ENCODE measurements at regions of chr12 and their contacts with region 1.

Region 1: DNA sequence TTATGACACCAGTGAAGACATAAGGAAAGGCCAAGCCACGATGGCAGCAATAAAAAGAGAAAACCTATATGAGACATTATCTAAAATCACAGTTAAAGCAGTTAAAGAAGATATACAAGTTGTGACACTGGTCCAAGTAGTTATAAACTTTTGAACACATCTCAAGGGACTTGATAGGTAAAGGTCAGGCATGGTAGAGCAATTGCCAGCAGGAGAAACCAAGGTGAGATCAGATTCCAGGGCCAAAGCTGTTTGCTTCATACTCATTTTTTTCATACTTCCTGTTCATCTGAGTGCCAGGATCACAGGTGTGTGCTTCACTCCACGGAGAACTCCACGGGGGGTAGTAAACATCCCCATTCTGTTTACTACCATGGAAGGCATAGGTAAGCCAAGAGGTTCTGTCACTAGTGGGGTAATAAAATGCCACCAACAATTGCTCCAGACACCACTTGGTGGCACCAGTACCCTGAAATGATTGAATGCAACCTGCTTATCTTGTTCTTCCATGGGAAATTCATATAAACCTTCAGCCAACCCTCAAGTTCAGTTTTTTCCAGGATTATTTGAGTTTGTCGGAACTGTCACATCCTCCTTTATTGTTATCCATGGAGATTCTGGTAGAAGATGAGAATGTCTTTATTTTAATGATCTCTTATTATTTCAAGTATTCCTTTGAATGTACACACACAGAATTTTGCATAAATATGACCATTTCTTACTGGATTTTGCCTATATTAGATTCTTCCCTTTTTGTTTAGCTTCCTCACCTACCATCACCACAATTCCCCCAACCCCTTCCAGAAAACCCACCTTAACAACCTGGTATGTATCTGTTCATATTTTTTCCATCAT is 59.2 kb upstream of the TSPAN8 start:
- DNase-seq: no peak
- ATAC-seq: peak in 2 of 4 donors; percentile 45 to 77
- H3K4me3 ChIP-seq: no peak overlapping the region
- H3K27ac ChIP-seq: no peak overlapping the region
- H3K4me1 ChIP-seq: no peaks in the 10 kb centered on the region
- H3K27me3 ChIP-seq: no peaks in the 10 kb centered on the region
- CTCF ChIP-seq: peak; percentile 52

Region 2: GRCh38 chr12:71746983-71747611 is 530.1 kb after region 1 on chr12:
- intact Hi-C with region 1: loop called in 1 of 2 experiments (anchors 10 kb)
- DNase-seq: no peak
- ATAC-seq: peak; percentile 81 to 99 (median 94)
- H3K4me3 ChIP-seq: no peak overlapping the region
- H3K27ac ChIP-seq: no peak overlapping the region
- H3K4me1 ChIP-seq: no peaks in the 10 kb centered on the region
- H3K27me3 ChIP-seq: no peaks in the 10 kb centered on the region
- CTCF ChIP-seq: peak; percentile 71

Measured in psoas muscle (tissue), 8 donors.